HepG2 (cell line): ENCODE measurements at regions of chr5 and their contacts with region 1.

Region 1: GRCh38 chr5:163505368-163506094 is at the start of gene MAT2B:
- DNase-seq: peak; percentile 87
- ATAC-seq: peak; percentile 96
- H3K4me3 ChIP-seq: peak within 1 kb of the TSS; percentile 64 to 99 (median 74)
- H3K27ac ChIP-seq: peak within 1 kb of the TSS; percentile 92
- H3K4me1 ChIP-seq: peaks cover 40% of the 10 kb centered on the region
- H3K27me3 ChIP-seq: no peaks in the 10 kb centered on the region; a peak in 1 of 5 replicates
- CTCF ChIP-seq: peak; percentile 81
- EP300 ChIP-seq: no peak
- POLR2A ChIP-seq: peak; percentile 87 to 89
- RAD21 ChIP-seq: 0 out of 2 replicates have a peak, but pooled peaks have one; percentile 31
- total RNA-seq, gene MAT2B: 37.1 and 62.6 TPM in 2 replicates

Region 2: GRCh38 chr5:163379298-163380155 is 126.0 kb before region 1 on chr5:
- CTCF ChIA-PET with region 1: no interaction called
- POLR2A ChIA-PET with region 1: no interaction called
- in situ Hi-C with region 1: no loop called
- intact Hi-C with region 1: no loop called
- DNase-seq: peak; percentile 44
- ATAC-seq: peak; percentile 57; the same call in 2 of the 3 replicates
- H3K4me3 ChIP-seq: no peak overlapping the region
- H3K27ac ChIP-seq: no peak overlapping the region
- H3K4me1 ChIP-seq: peaks cover 10% of the 10 kb centered on the region
- H3K27me3 ChIP-seq: no peaks in the 10 kb centered on the region
- CTCF ChIP-seq: no peak
- EP300 ChIP-seq: peak in 1 of 2 experiments; percentile 67; a peak in 2 of 4 replicates
- POLR2A ChIP-seq: no peak
- RAD21 ChIP-seq: no peak

Region 3: DNA sequence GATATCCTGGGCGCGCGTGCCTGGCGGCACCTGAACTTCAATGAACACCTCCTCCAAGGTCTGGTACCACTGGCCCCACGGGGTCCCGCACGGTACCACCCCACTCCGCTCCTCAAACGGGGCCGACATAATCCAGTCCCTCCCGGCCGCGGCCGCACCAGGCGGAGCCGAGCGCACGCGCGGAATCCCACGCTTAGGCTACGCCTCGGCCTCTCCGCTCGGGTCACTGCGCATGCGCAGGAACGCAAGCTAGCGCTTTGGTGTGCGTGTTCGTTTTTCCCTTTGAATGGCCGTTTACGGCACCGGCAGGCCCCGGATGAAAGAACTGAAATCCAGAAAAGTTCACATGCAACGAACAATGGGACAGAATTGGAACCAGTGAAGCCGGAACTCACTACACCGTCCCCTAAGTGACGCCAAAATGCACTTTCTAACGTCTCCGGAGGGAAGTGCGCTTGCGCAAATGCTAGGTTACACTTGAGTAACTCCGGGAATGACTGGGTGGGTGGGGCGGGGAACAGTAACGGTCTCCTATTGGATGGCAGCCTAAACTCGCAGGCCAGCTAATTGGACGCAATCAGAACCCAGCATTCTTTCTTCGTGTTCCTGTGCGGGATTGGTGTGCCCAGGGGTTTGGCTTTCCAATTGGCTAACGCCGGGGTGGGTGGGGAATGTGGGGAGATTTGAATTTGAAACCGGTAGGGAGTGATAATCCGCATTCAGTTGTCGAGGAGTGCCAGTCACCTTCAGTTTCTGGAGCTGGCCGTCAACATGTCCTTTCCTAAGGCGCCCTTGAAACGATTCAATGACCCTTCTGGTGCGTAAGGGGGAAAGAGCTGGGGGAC is 45.4 kb before region 1 on chr5 and contains the starts of genes HMMR and NUDCD2:
- CTCF ChIA-PET with region 1: no interaction called
- POLR2A ChIA-PET with region 1: interaction called, 37 read pairs
- in situ Hi-C with region 1: no loop called
- intact Hi-C with region 1: loop called (anchors 1 kb)
- DNase-seq: peak; percentile 98
- ATAC-seq: peak; percentile 90
- H3K4me3 ChIP-seq: peak within 1 kb of the TSS; percentile 73 to 88 (median 86)
- H3K27ac ChIP-seq: peak within 1 kb of the TSS; percentile 100
- H3K4me1 ChIP-seq: peaks cover 32% of the 10 kb centered on the region
- H3K27me3 ChIP-seq: peaks cover 0 to 4% of the 10 kb centered on the region in 2 experiments; a peak in 1 of 5 replicates
- CTCF ChIP-seq: no peak; the same call in 1 of the 2 replicates
- EP300 ChIP-seq: peak in 1 of 2 experiments; percentile 39; a peak in 1 of 4 replicates
- POLR2A ChIP-seq: peak; percentile 93 to 95
- RAD21 ChIP-seq: peak; percentile 59; the same call in 1 of the 2 replicates
- total RNA-seq, gene HMMR: 48.3 and 82.7 TPM in 2 replicates
- total RNA-seq, gene NUDCD2: 39.2 and 40.9 TPM in 2 replicates

Region 4: GRCh38 chr5:163473635-163474243 is 31.8 kb before region 1 on chr5:
- CTCF ChIA-PET with region 1: interaction called, 6 read pairs
- POLR2A ChIA-PET with region 1: no interaction called
- in situ Hi-C with region 1: no loop called
- intact Hi-C with region 1: loop called (anchors 1 kb)
- DNase-seq: no peak
- ATAC-seq: peak; percentile 56; the same call in 1 of the 3 replicates
- H3K4me3 ChIP-seq: no peak overlapping the region
- H3K27ac ChIP-seq: no peak overlapping the region
- H3K4me1 ChIP-seq: no peaks in the 10 kb centered on the region
- H3K27me3 ChIP-seq: no peaks in the 10 kb centered on the region
- CTCF ChIP-seq: peak; percentile 28
- EP300 ChIP-seq: no peak
- POLR2A ChIP-seq: no peak
- RAD21 ChIP-seq: no peak

Region 5: DNA sequence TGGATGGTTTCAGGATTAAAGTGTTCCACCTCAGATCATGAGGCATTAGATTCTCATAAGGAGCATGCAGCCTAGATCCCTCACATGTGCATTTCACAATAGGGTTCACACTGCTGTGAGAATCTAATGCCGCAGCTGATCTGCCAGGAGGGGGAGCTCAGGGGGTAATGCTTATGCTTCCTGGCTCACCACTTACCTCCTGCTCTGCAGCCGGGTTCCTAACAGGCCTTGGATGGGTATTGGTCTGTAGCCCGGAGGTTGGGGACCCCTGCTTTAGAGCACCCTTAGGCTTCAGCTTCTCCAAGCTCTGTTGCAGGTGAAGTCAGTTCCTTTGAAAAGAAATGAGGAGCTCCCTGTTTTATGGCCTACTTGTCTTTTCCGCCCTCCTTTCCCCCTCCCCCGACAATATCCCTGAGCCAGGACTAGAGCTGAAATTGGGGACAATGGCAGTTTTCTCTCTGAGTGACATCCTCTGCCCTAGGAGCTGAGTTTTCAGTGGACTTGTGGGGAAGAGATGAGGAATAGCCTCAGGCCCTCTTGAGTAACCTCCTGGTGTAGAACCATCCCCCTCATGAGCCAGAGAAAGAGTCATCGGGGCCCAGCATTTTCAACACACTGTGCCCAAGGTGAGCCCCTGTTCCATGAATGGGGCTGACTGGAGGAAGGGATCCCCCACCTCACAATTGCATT is 16.3 kb before region 1 on chr5:
- CTCF ChIA-PET with region 1: interaction called, 4 read pairs
- POLR2A ChIA-PET with region 1: interaction called, 4 read pairs
- in situ Hi-C with region 1: no loop called
- intact Hi-C with region 1: loop called (anchors 1 kb)
- DNase-seq: peak; percentile 18
- ATAC-seq: peak; percentile 93
- H3K4me3 ChIP-seq: no peak overlapping the region
- H3K27ac ChIP-seq: no peak overlapping the region
- H3K4me1 ChIP-seq: no peaks in the 10 kb centered on the region
- H3K27me3 ChIP-seq: no peaks in the 10 kb centered on the region; a peak in 1 of 5 replicates
- CTCF ChIP-seq: peak; percentile 57
- EP300 ChIP-seq: no peak
- POLR2A ChIP-seq: no peak
- RAD21 ChIP-seq: no peak